ENCODE measurements at regions of chr5 and their contacts with region 1.

Region 1: DNA sequence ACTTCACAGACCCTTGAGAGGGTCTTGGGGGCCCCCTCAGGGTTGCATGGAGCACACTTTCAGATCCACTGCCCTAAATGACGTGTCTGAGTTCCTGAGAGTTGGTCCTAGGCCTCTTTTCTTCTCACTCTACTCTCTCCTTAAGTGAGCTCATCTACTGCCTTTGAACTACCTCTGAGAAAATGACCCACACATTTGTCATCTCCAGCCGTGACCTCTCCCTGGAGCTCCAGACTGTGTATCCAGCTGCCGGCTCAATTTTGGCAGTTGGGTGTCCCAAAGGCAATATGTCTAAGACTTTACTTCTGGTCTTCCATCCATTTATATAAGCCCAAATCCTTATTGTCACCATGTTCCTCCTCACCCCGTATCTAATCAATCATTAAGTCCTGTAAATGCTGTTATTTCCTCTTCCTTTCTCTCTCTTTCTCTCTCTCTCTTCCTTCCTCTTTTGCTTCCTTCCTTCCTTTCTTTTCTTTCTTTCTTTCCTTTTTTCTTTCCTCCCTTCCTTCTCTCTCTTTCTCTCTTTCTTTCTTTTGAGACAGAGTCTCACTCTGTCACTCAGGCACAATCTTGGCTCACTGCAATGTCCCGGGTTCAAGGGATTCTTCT is 51.2 kb upstream of the HSPA9 start:
- DNase-seq: no peak
- H3K4me3 ChIP-seq: no peak overlapping the region
- H3K27ac ChIP-seq: no peak overlapping the region
- H3K4me1 ChIP-seq: no peaks in the 10 kb centered on the region
- H3K27me3 ChIP-seq: no peaks in the 10 kb centered on the region
- CTCF ChIP-seq: no peak

Region 2: GRCh38 chr5:138241688-138242571 is 384.5 kb before region 1 on chr5:
- CTCF ChIA-PET with region 1: no interaction called
- dilution Hi-C with region 1: no loop called
- in situ Hi-C with region 1: no loop called
- intact Hi-C with region 1: no loop called
- DNase-seq: no peak
- H3K4me3 ChIP-seq: peak overlapping the region in 1 of 3 experiments; percentile 16
- H3K27ac ChIP-seq: no peak overlapping the region
- H3K4me1 ChIP-seq: no peaks in the 10 kb centered on the region
- H3K27me3 ChIP-seq: peaks cover 14% of the 10 kb centered on the region
- CTCF ChIP-seq: no peak

Region 3: DNA sequence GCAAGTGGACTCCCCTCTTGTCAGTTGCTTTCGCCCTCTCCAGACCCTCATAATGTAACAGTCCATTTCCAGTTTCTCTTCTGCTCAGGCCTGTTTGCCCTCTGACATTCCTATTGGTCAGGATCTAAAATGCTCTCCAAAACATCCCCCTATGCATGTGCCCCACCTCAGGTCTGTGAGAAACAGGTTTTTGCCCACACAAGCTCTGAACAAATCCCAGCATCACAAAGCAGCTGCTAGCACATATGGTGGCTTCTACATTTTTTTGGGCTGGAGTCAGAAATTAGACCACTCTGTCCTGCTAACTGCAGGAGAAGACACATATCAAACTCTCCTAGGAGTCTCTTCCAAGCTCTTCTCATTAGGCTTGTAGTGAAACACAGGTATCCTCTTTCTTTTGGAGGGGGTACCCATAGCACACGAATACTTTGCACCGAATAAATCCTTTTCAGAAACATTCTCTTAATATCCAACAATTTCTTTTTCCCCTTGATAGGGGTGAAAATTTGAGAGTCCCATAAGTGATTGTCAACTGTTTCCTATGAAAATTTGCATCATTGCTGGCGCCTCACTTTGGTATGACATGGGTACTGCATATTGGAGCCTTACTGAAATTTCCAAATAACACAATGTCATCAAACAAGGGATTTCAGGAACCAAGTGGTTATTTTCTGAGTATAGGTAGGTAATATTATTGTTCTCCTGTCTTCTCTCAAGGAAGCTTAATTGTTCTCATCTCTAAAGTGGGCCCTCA is 32.0 kb before region 1 on chr5:
- CTCF ChIA-PET with region 1: no interaction called
- dilution Hi-C with region 1: loop called (anchors 5 kb)
- in situ Hi-C with region 1: no loop called
- intact Hi-C with region 1: no loop called
- DNase-seq: no peak
- H3K4me3 ChIP-seq: no peak overlapping the region
- H3K27ac ChIP-seq: no peak overlapping the region
- H3K4me1 ChIP-seq: no peaks in the 10 kb centered on the region
- H3K27me3 ChIP-seq: no peaks in the 10 kb centered on the region
- CTCF ChIP-seq: peak; percentile 46 to 50

Measured in mammary epithelial cell (primary cell).